ENCODE measurements at regions of chr5 and their contacts with region 1.

Region 1: DNA sequence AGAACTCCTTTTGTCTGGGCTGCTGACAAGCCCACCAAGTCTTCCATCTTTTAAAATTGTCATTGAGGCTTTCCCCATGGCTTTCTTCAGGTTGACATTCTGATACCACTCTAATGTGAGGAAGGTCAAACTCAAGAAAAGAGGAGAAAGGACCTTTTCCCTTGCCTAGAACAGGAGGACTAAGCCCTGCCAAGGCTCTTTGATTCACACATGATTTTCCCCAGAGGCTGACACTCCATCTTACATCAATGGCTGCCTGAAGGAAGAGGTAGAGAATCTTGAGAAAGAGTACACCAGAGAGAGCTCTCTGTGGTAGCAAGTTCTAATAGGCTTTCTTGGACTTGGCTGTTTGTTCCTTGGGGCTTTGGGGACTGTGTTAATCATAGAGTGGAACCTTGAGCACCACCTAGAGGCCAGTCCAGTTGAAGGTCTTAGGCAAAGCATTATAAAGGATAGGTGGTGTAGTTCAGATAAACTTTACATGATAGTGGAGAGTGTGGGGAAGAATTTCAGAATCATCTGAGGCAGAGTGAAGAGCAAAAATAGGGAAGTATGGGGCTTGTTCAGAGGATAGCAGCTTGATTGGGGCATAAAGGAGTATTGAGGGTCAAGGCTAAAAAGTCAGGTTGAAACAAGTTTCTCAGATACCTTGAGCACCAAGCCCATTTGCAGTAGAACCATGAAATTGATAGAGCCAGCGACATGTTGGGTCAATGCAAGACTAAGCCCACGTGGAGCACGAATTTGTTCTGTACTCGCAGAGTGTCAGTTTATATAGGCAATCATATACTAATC is 36.7 kb downstream of the NDFIP1 start:
- DNase-seq: peak in 8 of 9 donors; percentile 38 to 67 (median 58)
- ATAC-seq: peak; percentile 89
- H3K4me3 ChIP-seq: no peak overlapping the region
- H3K4me3 Mint-ChIP-seq: no peak overlapping the region
- H3K27ac ChIP-seq: no peak overlapping the region
- H3K27ac Mint-ChIP-seq: no peak overlapping the region
- H3K4me1 ChIP-seq: no peaks in the 10 kb centered on the region
- H3K4me1 Mint-ChIP-seq: peaks cover 0 to 17% (median 5%) of the 10 kb centered on the region in 7 donors
- H3K27me3 ChIP-seq: no peaks in the 10 kb centered on the region
- H3K27me3 Mint-ChIP-seq: no peaks in the 10 kb centered on the region

Region 2: DNA sequence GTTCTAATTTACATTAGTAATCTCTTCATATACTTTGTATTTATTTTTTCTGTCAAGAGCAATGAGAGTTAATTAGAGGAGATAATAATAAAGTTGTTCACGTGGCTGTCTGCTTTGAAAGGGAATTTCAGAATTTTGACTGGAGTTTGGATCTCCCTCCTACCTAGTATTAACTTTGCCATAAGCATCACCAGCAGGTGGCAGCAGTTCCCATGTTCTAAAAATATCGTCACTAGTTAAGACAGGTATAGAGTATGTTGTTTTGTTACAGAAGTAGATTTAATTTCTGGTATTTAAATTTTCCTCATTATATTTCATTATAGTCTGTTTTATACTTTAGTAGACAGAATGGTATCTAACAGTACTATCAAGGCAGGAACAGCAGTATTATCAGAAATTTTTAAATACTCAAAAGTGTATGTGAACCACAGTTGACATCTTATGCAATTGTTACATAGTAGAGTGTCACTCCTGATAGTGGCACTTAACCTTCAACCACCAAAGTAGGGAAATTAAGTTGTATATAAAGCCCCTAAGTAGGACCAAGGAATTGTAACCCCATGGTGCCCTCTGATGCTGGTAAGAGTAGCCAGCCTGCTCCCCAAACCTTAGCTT is 152.8 kb before region 1 on chr5:
- CTCF ChIA-PET with region 1: interaction called, 117 read pairs
- POLR2A ChIA-PET with region 1: no interaction called
- intact Hi-C with region 1: loop called (anchors 1 kb)
- DNase-seq: peak; percentile 49 to 77 (median 69)
- ATAC-seq: peak; percentile 88
- H3K4me3 ChIP-seq: no peak overlapping the region
- H3K4me3 Mint-ChIP-seq: no peak overlapping the region
- H3K27ac ChIP-seq: no peak overlapping the region
- H3K27ac Mint-ChIP-seq: peak overlapping the region in 2 of 9 donors; percentile 52 to 71
- H3K4me1 ChIP-seq: no peaks in the 10 kb centered on the region
- H3K4me1 Mint-ChIP-seq: peaks cover 4 to 18% (median 7%) of the 10 kb centered on the region in 7 donors
- H3K27me3 ChIP-seq: no peaks in the 10 kb centered on the region
- H3K27me3 Mint-ChIP-seq: no peaks in the 10 kb centered on the region

Region 3: GRCh38 chr5:142000703-142001484 is 144.4 kb before region 1 on chr5:
- CTCF ChIA-PET with region 1: interaction called, 117 read pairs
- POLR2A ChIA-PET with region 1: interaction called, 3 read pairs
- intact Hi-C with region 1: loop called in 1 of 2 experiments (anchors 2 kb)
- DNase-seq: no peak
- ATAC-seq: no peak
- H3K4me3 ChIP-seq: no peak overlapping the region
- H3K4me3 Mint-ChIP-seq: no peak overlapping the region
- H3K27ac ChIP-seq: no peak overlapping the region
- H3K27ac Mint-ChIP-seq: peak overlapping the region in 7 of 9 donors; percentile 3 to 77 (median 19)
- H3K4me1 ChIP-seq: peaks cover 0 to 27% of the 10 kb centered on the region in 2 donors
- H3K4me1 Mint-ChIP-seq: peaks cover 19 to 47% (median 29%) of the 10 kb centered on the region in 7 donors
- H3K27me3 ChIP-seq: no peaks in the 10 kb centered on the region
- H3K27me3 Mint-ChIP-seq: no peaks in the 10 kb centered on the region

Region 4: DNA sequence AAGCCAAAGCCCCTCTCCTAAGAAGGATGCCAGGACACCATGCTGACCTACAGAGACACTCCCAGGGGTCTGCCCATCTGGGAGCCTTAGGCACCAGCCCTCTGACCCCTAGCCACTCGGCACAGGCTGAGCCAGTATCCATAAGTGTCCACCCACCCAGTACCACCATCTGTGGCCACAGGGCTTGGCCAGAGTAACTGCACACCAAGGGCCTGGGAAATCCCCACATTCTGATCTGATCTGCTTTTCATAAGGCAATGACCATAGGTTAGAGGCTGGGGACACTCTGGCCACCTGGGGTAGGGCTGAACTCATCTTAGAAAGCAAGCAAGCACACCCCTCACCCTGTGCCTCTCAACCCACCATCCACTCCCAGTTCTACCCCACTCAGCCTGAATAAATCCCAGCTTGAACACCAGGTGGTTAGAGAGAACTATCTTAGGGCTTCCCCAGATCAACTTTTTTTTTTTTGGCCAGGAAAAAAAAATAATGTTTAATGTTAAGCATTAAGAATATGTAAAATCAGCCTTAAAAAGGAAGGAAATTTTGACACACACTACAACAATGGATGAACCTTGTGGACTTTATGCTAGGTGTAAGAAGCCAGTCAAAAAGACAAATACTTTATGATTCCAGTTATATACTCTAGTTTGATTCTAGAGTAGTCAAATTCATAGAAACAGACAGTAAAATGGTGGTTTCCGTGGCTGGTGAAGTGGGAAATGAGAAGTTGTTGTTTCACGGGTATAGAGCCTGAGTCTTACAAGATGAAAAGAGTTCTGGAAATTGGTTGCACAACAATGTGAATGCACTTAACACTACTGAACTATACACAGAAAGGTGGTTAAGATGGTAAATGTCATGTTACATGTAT is 138.7 kb before region 1 on chr5:
- CTCF ChIA-PET with region 1: interaction called, 82 read pairs
- POLR2A ChIA-PET with region 1: interaction called, 8 read pairs
- intact Hi-C with region 1: loop called in 1 of 2 experiments (anchors 2 kb)
- DNase-seq: peak in 7 of 9 donors; percentile 27 to 73 (median 54)
- ATAC-seq: peak; percentile 82
- H3K4me3 ChIP-seq: no peak overlapping the region
- H3K4me3 Mint-ChIP-seq: peak overlapping the region; percentile 27 to 82 (median 54)
- H3K27ac ChIP-seq: peak overlapping the region; percentile 51
- H3K27ac Mint-ChIP-seq: peak overlapping the region; percentile 60 to 95 (median 89)
- H3K4me1 ChIP-seq: peaks cover 9 to 58% of the 10 kb centered on the region in 2 donors
- H3K4me1 Mint-ChIP-seq: peaks cover 39 to 81% (median 74%) of the 10 kb centered on the region in 7 donors
- H3K27me3 ChIP-seq: no peaks in the 10 kb centered on the region
- H3K27me3 Mint-ChIP-seq: no peaks in the 10 kb centered on the region

Region 5: DNA sequence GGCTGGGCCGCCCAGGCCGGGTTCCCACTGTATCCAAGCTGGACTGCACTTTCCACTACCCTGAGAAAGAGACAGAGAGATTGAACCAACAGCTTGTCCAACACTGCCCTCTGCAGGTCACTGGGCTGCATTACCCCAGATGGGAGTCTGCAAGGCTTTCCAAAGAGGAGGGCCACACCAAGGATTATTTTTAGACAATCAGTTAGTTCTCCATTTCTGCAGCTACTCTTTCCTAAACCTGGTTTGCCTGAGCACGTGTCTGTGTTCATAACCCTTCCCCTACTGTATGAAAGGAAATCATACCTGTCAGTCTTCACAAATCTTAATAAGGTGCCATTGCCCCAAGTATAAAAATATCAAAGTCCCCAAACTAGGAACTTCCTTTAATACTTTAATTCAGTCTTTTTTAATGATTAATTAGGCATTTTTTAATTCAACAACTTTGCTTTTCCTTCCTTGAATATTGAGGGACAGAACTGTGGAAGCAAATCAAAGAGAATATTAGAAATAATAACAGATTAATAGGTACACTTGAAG is 553.9 kb after region 1 on chr5:
- CTCF ChIA-PET with region 1: interaction called, 5 read pairs
- POLR2A ChIA-PET with region 1: no interaction called
- intact Hi-C with region 1: loop called in 1 of 2 experiments (anchors 1 kb)
- DNase-seq: peak; percentile 53 to 79 (median 68)
- ATAC-seq: peak; percentile 95
- H3K4me3 ChIP-seq: no peak overlapping the region
- H3K4me3 Mint-ChIP-seq: no peak overlapping the region
- H3K27ac ChIP-seq: no peak overlapping the region
- H3K27ac Mint-ChIP-seq: no peak overlapping the region
- H3K4me1 ChIP-seq: no peaks in the 10 kb centered on the region
- H3K4me1 Mint-ChIP-seq: peaks cover 0 to 10% (median 2%) of the 10 kb centered on the region in 7 donors
- H3K27me3 ChIP-seq: no peaks in the 10 kb centered on the region
- H3K27me3 Mint-ChIP-seq: peaks cover 0 to 19% (median 5%) of the 10 kb centered on the region in 5 donors

Measured in naive thymus-derived CD4-positive, alpha-beta T cell (primary cell).